ENCODE measurements at regions of chr10 and their contacts with region 1.

Region 1: GRCh38 chr10:22259280-22259679 is 41.5 kb upstream of the EBLN1 start:
- DNase-seq: peak in 3 of 5 donors; percentile 15 to 26 (median 21)
- H3K4me3 ChIP-seq: no peak overlapping the region
- H3K4me3 Mint-ChIP-seq: no peak overlapping the region
- H3K27ac ChIP-seq: no peak overlapping the region
- H3K27ac Mint-ChIP-seq: peak overlapping the region in 2 of 7 donors; percentile 7 to 43
- H3K4me1 ChIP-seq: peaks cover 15% of the 10 kb centered on the region
- H3K4me1 Mint-ChIP-seq: peaks cover 6 to 33% (median 20%) of the 10 kb centered on the region in 4 donors
- H3K27me3 ChIP-seq: no peaks in the 10 kb centered on the region
- H3K27me3 Mint-ChIP-seq: peaks cover 0 to 3% of the 10 kb centered on the region in 2 donors

Region 2: GRCh38 chr10:22029445-22030236 is 229.6 kb before region 1 on chr10:
- CTCF ChIA-PET with region 1: no interaction called
- POLR2A ChIA-PET with region 1: no interaction called
- intact Hi-C with region 1: no loop called
- DNase-seq: peak in 3 of 5 donors; percentile 17 to 27 (median 26)
- H3K4me3 ChIP-seq: no peak overlapping the region
- H3K4me3 Mint-ChIP-seq: peak overlapping the region in 2 of 8 donors; percentile 0 to 21
- H3K27ac ChIP-seq: no peak overlapping the region
- H3K27ac Mint-ChIP-seq: peak overlapping the region in 1 of 7 donors; percentile 7
- H3K4me1 ChIP-seq: no peaks in the 10 kb centered on the region
- H3K4me1 Mint-ChIP-seq: peaks cover 2 to 8% (median 6%) of the 10 kb centered on the region in 4 donors
- H3K27me3 ChIP-seq: no peaks in the 10 kb centered on the region
- H3K27me3 Mint-ChIP-seq: peaks cover 17 to 19% of the 10 kb centered on the region in 2 donors

Region 3: DNA sequence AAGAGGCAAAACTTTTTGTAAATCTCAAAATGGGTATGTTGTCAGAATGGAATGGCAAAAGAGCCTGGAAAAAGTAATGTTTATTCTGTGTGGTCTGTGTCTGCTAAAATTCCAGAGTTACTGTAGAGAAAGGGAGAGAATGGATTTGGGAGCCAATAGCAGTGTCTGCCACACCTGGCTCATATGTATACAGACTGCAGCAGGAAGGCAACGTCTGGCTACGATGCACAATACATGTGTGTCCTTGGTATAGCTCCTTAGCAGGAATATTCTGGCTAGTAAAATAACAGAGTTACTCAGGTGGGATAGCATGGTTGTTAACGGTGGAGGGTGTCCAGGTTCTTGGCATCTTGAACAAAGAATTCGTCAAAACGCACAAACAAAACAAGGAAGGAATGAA is 18.4 kb after region 1 on chr10:
- CTCF ChIA-PET with region 1: no interaction called
- POLR2A ChIA-PET with region 1: no interaction called
- intact Hi-C with region 1: no loop called
- DNase-seq: no peak
- H3K4me3 ChIP-seq: no peak overlapping the region
- H3K4me3 Mint-ChIP-seq: peak overlapping the region in 1 of 8 donors; percentile 75
- H3K27ac ChIP-seq: no peak overlapping the region
- H3K27ac Mint-ChIP-seq: peak overlapping the region in 1 of 7 donors; percentile 11
- H3K4me1 ChIP-seq: no peaks in the 10 kb centered on the region
- H3K4me1 Mint-ChIP-seq: no peaks in the 10 kb centered on the region
- H3K27me3 ChIP-seq: no peaks in the 10 kb centered on the region
- H3K27me3 Mint-ChIP-seq: peaks cover 5 to 11% of the 10 kb centered on the region in 2 donors

Region 4: DNA sequence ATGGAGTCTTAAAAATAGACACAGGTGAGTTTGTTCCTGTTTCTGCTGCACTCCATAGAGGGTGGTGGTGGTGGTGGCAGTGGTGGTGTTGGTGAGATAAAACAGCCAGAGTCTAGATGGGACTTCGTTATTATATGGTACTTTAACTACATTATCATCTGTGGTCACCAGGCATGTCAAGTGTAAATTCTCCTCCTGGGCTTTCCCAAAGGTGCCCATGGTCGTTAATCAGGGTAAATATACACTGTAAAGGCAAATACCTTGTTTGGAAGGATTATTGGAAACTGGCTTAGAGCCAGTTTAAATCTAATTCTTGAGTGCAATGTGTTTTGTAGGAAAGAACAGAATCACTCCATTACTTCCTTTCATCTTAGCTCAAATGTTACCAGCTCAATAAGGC is 35.4 kb after region 1 on chr10:
- CTCF ChIA-PET with region 1: no interaction called
- POLR2A ChIA-PET with region 1: no interaction called
- intact Hi-C with region 1: no loop called
- DNase-seq: no peak
- H3K4me3 ChIP-seq: no peak overlapping the region
- H3K4me3 Mint-ChIP-seq: no peak overlapping the region
- H3K27ac ChIP-seq: no peak overlapping the region
- H3K27ac Mint-ChIP-seq: no peak overlapping the region
- H3K4me1 ChIP-seq: no peaks in the 10 kb centered on the region
- H3K4me1 Mint-ChIP-seq: no peaks in the 10 kb centered on the region
- H3K27me3 ChIP-seq: no peaks in the 10 kb centered on the region
- H3K27me3 Mint-ChIP-seq: peaks cover 13 to 15% of the 10 kb centered on the region in 2 donors

Region 5: GRCh38 chr10:22420787-22421517 is 161.7 kb after region 1 on chr10:
- CTCF ChIA-PET with region 1: interaction called, 6 read pairs
- POLR2A ChIA-PET with region 1: no interaction called
- intact Hi-C with region 1: loop called (anchors 1 kb)
- DNase-seq: peak in 4 of 5 donors; percentile 37 to 41 (median 39)
- H3K4me3 ChIP-seq: no peak overlapping the region
- H3K4me3 Mint-ChIP-seq: no peak overlapping the region
- H3K27ac ChIP-seq: no peak overlapping the region
- H3K27ac Mint-ChIP-seq: no peak overlapping the region
- H3K4me1 ChIP-seq: no peaks in the 10 kb centered on the region
- H3K4me1 Mint-ChIP-seq: no peaks in the 10 kb centered on the region
- H3K27me3 ChIP-seq: no peaks in the 10 kb centered on the region
- H3K27me3 Mint-ChIP-seq: no peaks in the 10 kb centered on the region

Region 6: GRCh38 chr10:22580711-22581110 is 321.4 kb after region 1 on chr10:
- CTCF ChIA-PET with region 1: no interaction called
- POLR2A ChIA-PET with region 1: no interaction called
- intact Hi-C with region 1: no loop called
- DNase-seq: no peak
- H3K4me3 ChIP-seq: no peak overlapping the region
- H3K4me3 Mint-ChIP-seq: no peak overlapping the region
- H3K27ac ChIP-seq: no peak overlapping the region
- H3K27ac Mint-ChIP-seq: peak overlapping the region in 3 of 7 donors; percentile 6 to 47 (median 41)
- H3K4me1 ChIP-seq: peaks cover 3% of the 10 kb centered on the region
- H3K4me1 Mint-ChIP-seq: peaks cover 23 to 60% (median 45%) of the 10 kb centered on the region in 4 donors
- H3K27me3 ChIP-seq: no peaks in the 10 kb centered on the region
- H3K27me3 Mint-ChIP-seq: no peaks in the 10 kb centered on the region

Region 7: GRCh38 chr10:23067939-23068775 is 808.9 kb after region 1 on chr10:
- CTCF ChIA-PET with region 1: interaction called, 4 read pairs
- POLR2A ChIA-PET with region 1: no interaction called
- intact Hi-C with region 1: loop called (anchors 5 kb)
- DNase-seq: peak; percentile 43 to 51 (median 49)
- H3K4me3 ChIP-seq: no peak overlapping the region
- H3K4me3 Mint-ChIP-seq: peak overlapping the region in 1 of 8 donors; percentile 10
- H3K27ac ChIP-seq: no peak overlapping the region
- H3K27ac Mint-ChIP-seq: peak overlapping the region in 1 of 7 donors; percentile 41
- H3K4me1 ChIP-seq: no peaks in the 10 kb centered on the region
- H3K4me1 Mint-ChIP-seq: peaks cover 0 to 7% (median 1%) of the 10 kb centered on the region in 4 donors
- H3K27me3 ChIP-seq: no peaks in the 10 kb centered on the region
- H3K27me3 Mint-ChIP-seq: peaks cover 4 to 15% of the 10 kb centered on the region in 2 donors